ENCODE measurements at regions of chr12 and their contacts with region 1.

Region 1: GRCh38 chr12:124578445-124578844 is 11.0 kb upstream of the NCOR2 start:
- DNase-seq: no peak
- ATAC-seq: no peak
- H3K4me3 ChIP-seq: no peak overlapping the region
- H3K27ac ChIP-seq: no peak overlapping the region
- H3K4me1 ChIP-seq: peaks cover 7% of the 10 kb centered on the region
- H3K27me3 ChIP-seq: no peaks in the 10 kb centered on the region

Region 2: GRCh38 chr12:124661341-124661740 is 82.9 kb after region 1 on chr12:
- intact Hi-C with region 1: loop called in 1 of 4 experiments (anchors 10 kb)
- DNase-seq: peak in 2 of 3 donors; percentile 15 to 22
- ATAC-seq: no peak
- H3K4me3 ChIP-seq: no peak overlapping the region
- H3K27ac ChIP-seq: no peak overlapping the region
- H3K4me1 ChIP-seq: peaks cover 9% of the 10 kb centered on the region
- H3K27me3 ChIP-seq: no peaks in the 10 kb centered on the region

Region 3: DNA sequence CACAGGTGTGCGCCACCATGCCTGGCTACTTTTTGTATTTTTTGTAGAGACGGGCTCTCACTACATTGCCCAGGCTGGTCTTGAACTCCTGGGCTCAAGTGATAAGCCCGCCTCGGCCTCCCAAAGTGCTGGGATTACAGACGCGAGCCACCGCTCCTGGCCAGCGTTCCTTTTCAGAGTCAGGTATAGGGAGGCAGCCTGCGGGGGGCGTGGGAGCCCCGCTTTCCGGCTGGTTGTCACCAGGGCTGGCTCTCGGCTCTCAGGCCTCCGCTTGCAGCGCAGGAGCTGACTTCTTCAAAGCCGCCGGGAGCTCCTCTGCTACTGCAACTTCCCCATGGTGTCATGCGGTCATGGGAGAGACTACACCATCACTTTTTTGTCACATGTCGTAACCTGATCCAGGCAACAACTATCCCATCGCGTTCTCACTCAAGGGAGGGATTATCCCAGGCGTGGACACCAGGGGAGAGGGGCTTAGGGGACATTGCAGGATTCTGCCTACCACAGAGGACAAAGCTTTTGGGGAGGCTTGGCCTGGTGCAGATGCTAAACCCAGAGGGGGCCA is 155.9 kb after region 1 on chr12:
- intact Hi-C with region 1: loop called in 1 of 4 experiments (anchors 10 kb)
- DNase-seq: peak in 2 of 3 donors; percentile 78 to 79
- ATAC-seq: peak; percentile 8 to 13
- H3K4me3 ChIP-seq: no peak overlapping the region
- H3K27ac ChIP-seq: peak overlapping the region; percentile 48
- H3K4me1 ChIP-seq: peaks cover 4% of the 10 kb centered on the region
- H3K27me3 ChIP-seq: no peaks in the 10 kb centered on the region